Prostate gland (tissue), 2 donors: ENCODE measurements at regions of chr7 and their contacts with region 1.

Region 1: GRCh38 chr7:32204361-32205018 is 134.3 kb upstream of the PDE1C start:
- DNase-seq: peak; percentile 47
- H3K4me3 ChIP-seq: no peak overlapping the region
- H3K27ac ChIP-seq: no peak overlapping the region
- H3K4me1 ChIP-seq: no peaks in the 10 kb centered on the region
- H3K27me3 ChIP-seq: no peaks in the 10 kb centered on the region
- CTCF ChIP-seq: peak; percentile 21 to 85 (median 66)
- POLR2A ChIP-seq: no peak

Region 2: GRCh38 chr7:31744294-31744874 is 460.1 kb before region 1 on chr7:
- intact Hi-C with region 1: loop called (anchors 2 kb)
- DNase-seq: peak; percentile 62
- H3K4me3 ChIP-seq: no peak overlapping the region
- H3K27ac ChIP-seq: no peak overlapping the region
- H3K4me1 ChIP-seq: no peaks in the 10 kb centered on the region
- H3K27me3 ChIP-seq: no peaks in the 10 kb centered on the region
- CTCF ChIP-seq: peak; percentile 34 to 89 (median 84)
- POLR2A ChIP-seq: no peak